GM10248 (cell line): ENCODE measurements at regions of chr12 and their contacts with region 1.

Region 1: DNA sequence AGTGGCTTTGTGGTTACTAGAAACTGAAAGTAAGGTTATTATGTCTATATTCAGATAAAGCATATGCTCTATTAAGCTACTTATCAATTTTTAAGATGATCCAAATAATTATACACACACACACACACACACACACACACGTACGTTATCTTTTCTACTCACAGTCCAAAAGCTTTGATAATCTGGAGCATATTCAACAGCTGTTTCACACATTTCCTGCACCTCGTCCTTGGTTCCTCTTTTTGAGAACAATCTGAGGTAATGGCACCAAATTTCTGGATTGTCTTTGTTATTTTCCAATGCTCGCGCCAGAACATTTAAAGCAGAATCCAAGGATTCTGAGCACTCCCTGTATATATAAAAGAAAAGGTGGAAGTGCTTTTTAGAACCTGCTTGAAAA is 37.5 kb downstream of the ZFC3H1 start:
- DNase-seq: peak; percentile 19
- CTCF ChIP-seq: no peak

Region 2: DNA sequence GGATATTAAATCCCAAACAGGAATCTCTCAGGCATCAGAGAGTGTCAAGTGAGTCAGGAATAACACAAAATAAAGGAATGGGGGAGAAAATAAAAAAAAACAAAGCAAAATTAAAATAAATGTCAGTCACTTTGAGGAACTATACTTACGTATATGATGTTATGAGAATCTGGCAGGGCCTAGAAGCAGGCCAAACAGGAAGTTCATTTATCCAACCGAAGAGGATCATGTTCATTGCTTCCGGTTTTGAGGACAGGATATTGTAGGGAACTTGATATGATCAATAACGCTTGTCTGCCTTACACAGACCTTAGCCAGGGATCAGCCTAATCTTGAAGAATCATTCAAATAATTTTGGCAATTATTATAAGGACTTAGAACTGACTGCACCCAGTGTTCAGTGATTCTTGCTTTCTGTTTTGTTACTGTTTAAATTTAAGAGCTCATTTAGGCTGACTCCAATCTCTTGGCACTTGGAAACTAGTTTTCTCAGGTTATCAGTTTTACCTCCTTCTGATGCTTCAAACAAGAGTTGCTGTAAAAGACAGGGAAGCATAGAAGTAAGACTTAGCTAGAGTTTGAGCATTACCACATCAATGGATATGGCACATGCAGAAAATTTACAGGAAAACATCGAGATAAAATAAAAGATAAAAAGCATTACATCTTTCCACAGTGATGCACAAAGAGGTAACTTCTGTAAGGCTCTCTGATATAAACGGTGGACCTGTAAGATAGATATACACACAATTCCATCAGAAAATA is 15.9 kb before region 1 on chr12:
- CTCF ChIA-PET with region 1: interaction called, 18 read pairs
- POLR2A ChIA-PET with region 1: no interaction called
- DNase-seq: no peak
- CTCF ChIP-seq: no peak